ENCODE measurements at regions of chr13 and their contacts with region 1.

Region 1: GRCh38 chr13:67043901-67044300 is 186.2 kb downstream of the PCDH9 start:
- DNase-seq: no peak
- ATAC-seq: no peak
- H3K4me3 ChIP-seq: no peak overlapping the region
- H3K4me3 Mint-ChIP-seq: no peak overlapping the region
- H3K27ac ChIP-seq: no peak overlapping the region
- H3K27ac Mint-ChIP-seq: no peak overlapping the region
- H3K4me1 ChIP-seq: peaks cover 0 to 7% of the 10 kb centered on the region in 2 experiments
- H3K4me1 Mint-ChIP-seq: peaks cover 0 to 12% (median 4%) of the 10 kb centered on the region in 3 donors
- H3K27me3 ChIP-seq: no peaks in the 10 kb centered on the region
- H3K27me3 Mint-ChIP-seq: no peaks in the 10 kb centered on the region

Region 2: GRCh38 chr13:67023130-67023879 is 20.6 kb before region 1 on chr13:
- CTCF ChIA-PET with region 1: no interaction called
- POLR2A ChIA-PET with region 1: no interaction called
- DNase-seq: no peak
- ATAC-seq: no peak
- H3K4me3 ChIP-seq: no peak overlapping the region
- H3K4me3 Mint-ChIP-seq: no peak overlapping the region
- H3K27ac ChIP-seq: no peak overlapping the region
- H3K27ac Mint-ChIP-seq: no peak overlapping the region
- H3K4me1 ChIP-seq: peaks cover 0 to 10% of the 10 kb centered on the region in 2 experiments
- H3K4me1 Mint-ChIP-seq: peaks cover 0 to 11% (median 2%) of the 10 kb centered on the region in 3 donors
- H3K27me3 ChIP-seq: no peaks in the 10 kb centered on the region
- H3K27me3 Mint-ChIP-seq: no peaks in the 10 kb centered on the region

Region 3: GRCh38 chr13:67061750-67062149 is 17.8 kb after region 1 on chr13:
- CTCF ChIA-PET with region 1: no interaction called
- POLR2A ChIA-PET with region 1: interaction called in 1 of 2 experiments, 11 read pairs
- DNase-seq: no peak
- ATAC-seq: no peak
- H3K4me3 ChIP-seq: no peak overlapping the region
- H3K4me3 Mint-ChIP-seq: no peak overlapping the region
- H3K27ac ChIP-seq: no peak overlapping the region
- H3K27ac Mint-ChIP-seq: no peak overlapping the region
- H3K4me1 ChIP-seq: no peaks in the 10 kb centered on the region
- H3K4me1 Mint-ChIP-seq: no peaks in the 10 kb centered on the region
- H3K27me3 ChIP-seq: no peaks in the 10 kb centered on the region
- H3K27me3 Mint-ChIP-seq: no peaks in the 10 kb centered on the region

Measured in T-cell (primary cell).